H1 (cell line): ENCODE measurements at regions of chr17 and their contacts with region 1.

Region 1: GRCh38 chr17:7336240-7337175 is at the start of gene ACAP1:
- DNase-seq: peak; percentile 44 to 79
- H3K4me3 ChIP-seq: peak within 1 kb of the TSS in 3 of 4 experiments; percentile 10 to 52 (median 32); a peak in 6 of 8 replicates
- H3K27ac ChIP-seq: peak within 1 kb of the TSS; percentile 51; the same call in 1 of the 2 replicates
- H3K4me1 ChIP-seq: peaks cover 3 to 16% (median 14%) of the 10 kb centered on the region in 4 experiments
- H3K27me3 ChIP-seq: no peaks in the 10 kb centered on the region
- CTCF ChIP-seq: no peak
- EP300 ChIP-seq: peak in 1 of 2 experiments; percentile 52; a peak in 1 of 3 replicates
- POLR2A ChIP-seq: peak in 1 of 2 experiments; percentile 32; a peak in 2 of 3 replicates
- RAD21 ChIP-seq: peak in 1 of 2 experiments; percentile 16; a peak in 1 of 4 replicates
- total RNA-seq, gene ACAP1: 45.1 and 49.2 TPM in 2 replicates

Region 2: GRCh38 chr17:7261172-7261927 is 75.2 kb before region 1 on chr17:
- CTCF ChIA-PET with region 1: no interaction called
- POLR2A ChIA-PET with region 1: interaction called, 12 read pairs
- DNase-seq: peak in 1 of 2 experiments; percentile 86
- H3K4me3 ChIP-seq: peak overlapping the region; percentile 93 to 98 (median 96)
- H3K27ac ChIP-seq: peak overlapping the region; percentile 91
- H3K4me1 ChIP-seq: peaks cover 4 to 15% (median 6%) of the 10 kb centered on the region in 4 experiments; a peak in 6 of 7 replicates
- H3K27me3 ChIP-seq: no peaks in the 10 kb centered on the region
- CTCF ChIP-seq: no peak
- EP300 ChIP-seq: peak in 1 of 2 experiments; percentile 96; a peak in 2 of 3 replicates
- POLR2A ChIP-seq: peak; percentile 72 to 91
- RAD21 ChIP-seq: no peak

Region 3: GRCh38 chr17:7323731-7324437 is 12.6 kb before region 1 on chr17:
- CTCF ChIA-PET with region 1: interaction called, 167 read pairs
- POLR2A ChIA-PET with region 1: interaction called, 223 read pairs
- DNase-seq: peak; percentile 47 to 99
- H3K4me3 ChIP-seq: no peak overlapping the region
- H3K27ac ChIP-seq: no peak overlapping the region
- H3K4me1 ChIP-seq: peaks cover 0 to 10% (median under 1%) of the 10 kb centered on the region in 4 experiments; a peak in 2 of 7 replicates
- H3K27me3 ChIP-seq: no peaks in the 10 kb centered on the region; a peak in 1 of 7 replicates
- CTCF ChIP-seq: peak; percentile 93 to 97 (median 94)
- EP300 ChIP-seq: peak in 1 of 2 experiments; percentile 28; a peak in 1 of 3 replicates
- POLR2A ChIP-seq: no peak
- RAD21 ChIP-seq: peak; percentile 74 to 84

Region 4: GRCh38 chr17:7403977-7404736 is 67.6 kb after region 1 on chr17 and contains the start of gene TMEM256:
- CTCF ChIA-PET with region 1: no interaction called
- POLR2A ChIA-PET with region 1: interaction called, 10 read pairs
- DNase-seq: peak; percentile 96 to 99
- H3K4me3 ChIP-seq: peak within 1 kb of the TSS; percentile 72 to 94 (median 81)
- H3K27ac ChIP-seq: peak within 1 kb of the TSS; percentile 81; the same call in 1 of the 2 replicates
- H3K4me1 ChIP-seq: peaks cover 0 to 15% (median 11%) of the 10 kb centered on the region in 4 experiments; a peak in 5 of 7 replicates
- H3K27me3 ChIP-seq: no peaks in the 10 kb centered on the region; a peak in 1 of 7 replicates
- CTCF ChIP-seq: no peak
- EP300 ChIP-seq: no peak
- POLR2A ChIP-seq: peak in 1 of 2 experiments; percentile 74; a peak in 2 of 3 replicates
- RAD21 ChIP-seq: no peak
- total RNA-seq, gene TMEM256: 97.0 and 104 TPM in 2 replicates